ENCODE measurements at regions of chr18 and their contacts with region 1.

Region 1: DNA sequence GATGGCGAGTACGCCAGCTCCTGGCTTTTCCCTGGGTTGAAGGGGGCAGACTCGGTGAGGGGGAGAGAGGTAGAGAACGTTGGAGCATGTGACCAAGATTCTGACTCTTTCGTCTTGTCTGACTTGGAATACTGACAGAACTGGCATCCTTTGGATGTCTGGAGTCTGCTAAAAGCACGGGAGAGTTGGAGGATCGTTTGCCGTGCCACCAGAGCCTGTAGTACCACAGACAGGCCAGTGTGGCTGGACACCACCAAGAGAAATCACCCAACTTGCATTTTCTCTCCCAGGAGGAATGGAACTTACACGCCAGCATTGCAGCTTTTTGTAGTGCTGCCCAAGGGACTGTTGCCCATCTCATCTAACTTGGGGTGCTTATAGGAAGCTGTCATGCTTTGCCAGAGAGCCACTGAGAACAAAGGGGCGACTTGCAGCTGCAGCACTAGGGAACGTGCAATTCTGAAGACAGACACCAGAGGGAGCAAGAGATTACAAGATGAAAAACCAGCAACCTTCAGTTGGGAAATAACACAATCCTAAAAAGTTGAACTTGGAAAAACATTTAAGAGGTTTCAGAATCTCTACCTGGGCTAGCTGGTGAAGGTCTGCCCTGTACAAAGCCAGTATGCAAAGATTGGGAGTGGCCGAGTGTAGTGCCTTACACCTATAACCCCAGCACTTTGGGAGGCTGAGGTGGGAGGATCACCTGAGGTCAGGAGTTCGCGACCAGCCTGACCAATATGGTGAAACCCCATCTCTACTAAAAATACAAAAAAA is 24.1 kb downstream of the PSMG2 start:
- DNase-seq: peak in 1 of 3 donors; percentile 89
- ATAC-seq: peak; percentile 82
- H3K4me3 ChIP-seq: no peak overlapping the region
- H3K4me1 ChIP-seq: no peaks in the 10 kb centered on the region
- CTCF ChIP-seq: peak; percentile 69

Region 2: GRCh38 chr18:12934454-12935071 is 207.6 kb after region 1 on chr18:
- intact Hi-C with region 1: loop called (anchors 2 to 5 kb)
- DNase-seq: peak; percentile 61 to 93 (median 86)
- ATAC-seq: peak; percentile 86
- H3K4me3 ChIP-seq: no peak overlapping the region
- H3K4me1 ChIP-seq: no peaks in the 10 kb centered on the region
- CTCF ChIP-seq: peak; percentile 45

Region 3: DNA sequence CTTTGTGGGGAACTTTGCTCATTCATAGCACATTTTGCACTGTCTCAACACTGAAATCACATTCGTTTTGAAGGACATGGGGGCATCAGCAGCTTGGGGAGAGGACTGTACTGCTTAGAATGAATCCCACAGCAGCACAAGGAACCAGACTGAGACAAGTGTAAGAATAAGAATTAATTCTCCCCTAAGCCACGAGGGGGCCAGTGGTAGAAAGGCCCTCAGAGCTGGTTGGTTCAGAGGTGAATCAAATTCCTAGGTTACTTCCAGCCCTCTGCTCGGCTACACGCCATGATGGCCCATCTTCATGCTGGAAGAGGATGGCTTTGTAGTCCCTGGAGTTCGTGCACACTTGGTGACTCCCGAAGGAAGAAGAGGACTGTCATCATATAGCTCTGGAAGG is 1085.0 kb after region 1 on chr18:
- intact Hi-C with region 1: no loop called
- DNase-seq: no peak
- ATAC-seq: no peak
- H3K4me3 ChIP-seq: no peak overlapping the region
- H3K4me1 ChIP-seq: peaks cover 16% of the 10 kb centered on the region
- CTCF ChIP-seq: no peak

Measured in mucosa of descending colon (tissue), 3 donors.